ENCODE measurements at regions of chr13 and their contacts with region 1.

Region 1: DNA sequence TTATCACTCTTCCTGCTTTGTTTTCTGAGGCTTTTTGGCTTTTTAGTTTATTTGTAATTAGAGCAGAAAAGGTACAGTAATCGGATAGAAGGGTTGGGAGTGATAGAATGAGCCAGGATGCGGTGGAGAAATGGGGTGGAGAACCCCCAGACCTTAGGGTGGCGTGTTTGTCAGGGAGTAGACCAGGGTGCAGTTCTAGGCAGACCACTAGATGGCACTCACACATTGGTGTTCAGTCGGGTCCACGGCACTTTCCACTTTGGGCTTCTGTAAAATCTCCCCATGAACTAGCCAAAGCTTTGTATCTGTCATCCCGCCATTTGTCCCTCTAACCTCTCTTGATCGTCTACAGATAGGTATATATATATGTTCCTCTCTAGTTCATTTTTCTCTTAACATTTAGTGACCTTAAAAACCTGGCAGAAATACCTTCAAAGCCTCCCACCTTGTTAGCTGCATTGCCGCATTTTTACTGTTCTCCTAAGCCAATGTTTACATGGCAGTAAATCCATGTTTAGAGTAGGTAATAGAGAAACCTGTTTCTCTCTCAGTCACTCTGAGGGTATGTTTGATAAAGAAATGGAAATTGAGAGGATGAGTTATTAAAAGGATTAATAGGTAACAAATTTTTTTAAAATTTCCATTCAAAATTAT is 154.9 kb downstream of the TM9SF2 start:
- DNase-seq: no peak
- ATAC-seq: peak; percentile 75

Region 2: DNA sequence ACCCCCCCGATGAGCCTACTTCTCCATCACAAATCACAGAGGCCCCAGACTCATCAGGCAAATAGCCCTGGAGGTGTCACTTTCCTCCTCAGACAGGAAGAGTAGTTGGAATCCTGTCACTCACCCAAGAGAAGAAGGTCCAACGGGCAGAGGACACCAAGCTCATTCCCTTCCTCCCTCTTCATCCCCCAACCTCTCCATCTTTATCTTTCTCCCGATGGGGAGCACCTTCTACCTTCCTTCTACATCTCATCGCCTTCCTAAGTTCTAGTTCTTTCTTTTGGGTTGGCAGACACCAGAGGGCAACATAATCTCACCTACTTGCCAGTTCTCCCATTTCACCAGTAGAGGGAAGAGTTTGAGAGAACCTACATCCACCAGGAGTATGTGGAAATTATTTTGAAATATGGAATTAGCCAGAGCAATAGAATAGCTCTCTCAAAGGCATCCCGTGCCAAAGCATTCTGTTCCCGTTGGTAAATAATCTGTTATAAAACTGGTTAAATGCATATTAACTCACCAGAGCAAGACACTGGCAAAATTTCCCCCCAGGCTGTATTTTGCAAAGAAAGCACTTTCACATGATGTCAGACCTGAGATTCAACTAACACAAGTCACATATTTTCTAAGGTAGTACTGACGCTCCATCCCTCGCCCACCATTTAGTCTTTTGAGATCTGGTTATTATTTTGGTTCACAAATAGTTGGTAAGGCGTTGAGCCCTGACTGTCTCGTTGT is 260.3 kb after region 1 on chr13:
- intact Hi-C with region 1: loop called (anchors 1 kb)
- DNase-seq: no peak
- ATAC-seq: peak; percentile 71

Region 3: DNA sequence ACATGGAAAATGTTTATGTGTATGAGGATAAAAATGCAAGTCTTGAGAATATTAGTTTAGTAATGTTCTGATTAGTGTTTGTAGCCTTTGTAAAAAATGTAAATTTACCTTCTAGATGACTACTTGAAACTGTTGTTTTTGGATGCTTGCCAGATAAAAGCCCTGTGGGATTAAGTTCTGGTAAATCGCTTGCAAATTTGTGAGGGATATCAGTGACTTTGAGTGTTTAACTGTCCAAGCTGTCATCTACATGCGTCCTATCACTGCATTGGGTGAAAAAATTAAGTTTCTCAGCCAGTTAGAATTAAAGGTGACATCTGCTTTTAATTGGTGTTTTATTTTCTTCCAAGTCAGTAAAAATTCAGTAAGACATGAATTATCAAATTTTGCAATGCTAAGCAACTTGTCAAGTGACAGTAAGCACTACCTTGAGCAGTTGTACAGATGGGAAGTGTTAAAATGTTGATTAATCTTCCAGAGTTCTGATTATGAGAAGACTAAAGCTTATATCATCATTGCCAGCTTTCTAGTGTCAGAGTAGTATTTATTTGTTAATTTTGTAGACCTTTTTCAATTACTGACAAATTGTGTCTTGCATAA is 520.7 kb after region 1 on chr13:
- intact Hi-C with region 1: no loop called
- DNase-seq: no peak
- ATAC-seq: no peak

Region 4: DNA sequence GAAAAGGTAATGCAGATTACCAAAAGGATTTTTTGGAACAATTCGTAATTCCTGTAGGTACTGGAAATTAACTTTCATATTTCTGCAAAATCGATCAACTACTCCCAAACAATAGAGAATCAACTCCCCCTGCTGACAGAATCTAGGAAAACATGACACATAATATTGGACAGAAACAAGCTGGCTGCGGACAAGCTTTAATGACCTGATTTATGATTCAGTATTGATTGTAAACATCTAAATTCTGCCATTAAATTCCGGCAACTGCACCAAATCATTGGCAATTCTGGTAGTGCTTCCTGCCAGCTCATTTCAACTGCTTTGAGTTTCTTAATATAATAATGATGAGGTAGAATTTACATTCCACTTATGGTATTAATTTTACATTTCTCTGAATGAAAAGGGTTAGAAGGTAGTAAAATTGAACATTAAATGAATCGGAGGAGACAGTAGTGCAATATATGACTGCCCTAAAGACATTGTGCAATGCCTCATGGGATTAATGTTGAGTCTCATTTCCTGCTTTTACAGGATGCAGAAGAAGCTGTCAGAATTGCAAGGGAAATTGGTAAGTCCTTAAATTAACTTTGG is 579.2 kb after region 1 on chr13:
- intact Hi-C with region 1: loop called (anchors 2 kb)
- DNase-seq: no peak
- ATAC-seq: no peak

Region 5: DNA sequence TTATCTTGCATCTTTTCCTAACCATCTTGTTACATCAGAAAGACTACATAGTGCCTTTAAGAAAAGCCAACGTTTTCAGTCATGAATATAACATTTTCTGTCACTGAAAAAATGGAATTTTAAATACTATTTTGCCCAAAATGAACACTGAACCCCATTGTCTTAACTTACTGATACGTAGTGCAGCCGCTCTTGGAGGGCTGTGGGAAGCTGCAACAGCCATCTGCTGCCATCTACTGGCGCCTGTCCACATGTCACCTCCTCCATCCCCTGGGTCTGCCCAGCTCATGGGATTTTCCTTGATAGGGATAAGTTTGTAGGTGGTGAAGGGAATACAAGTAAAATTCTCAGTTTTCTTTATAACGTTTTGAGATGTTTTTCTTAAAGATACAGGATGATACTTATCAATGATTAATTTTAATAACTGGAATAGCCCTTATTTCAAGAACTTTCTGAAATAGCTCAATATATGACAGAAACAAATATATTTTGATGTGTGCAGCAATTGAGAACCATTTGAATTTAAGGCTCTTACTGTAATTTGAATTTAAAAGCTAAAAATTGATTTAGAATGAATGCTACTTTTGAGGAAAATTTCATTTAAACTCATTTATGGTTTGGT is 858.7 kb after region 1 on chr13:
- intact Hi-C with region 1: loop called (anchors 2 kb)
- DNase-seq: peak; percentile 80
- ATAC-seq: peak; percentile 91

Region 6: GRCh38 chr13:101098873-101099272 is 1442.7 kb after region 1 on chr13:
- intact Hi-C with region 1: loop called (anchors 5 kb)
- DNase-seq: no peak
- ATAC-seq: peak; percentile 10

Region 7: DNA sequence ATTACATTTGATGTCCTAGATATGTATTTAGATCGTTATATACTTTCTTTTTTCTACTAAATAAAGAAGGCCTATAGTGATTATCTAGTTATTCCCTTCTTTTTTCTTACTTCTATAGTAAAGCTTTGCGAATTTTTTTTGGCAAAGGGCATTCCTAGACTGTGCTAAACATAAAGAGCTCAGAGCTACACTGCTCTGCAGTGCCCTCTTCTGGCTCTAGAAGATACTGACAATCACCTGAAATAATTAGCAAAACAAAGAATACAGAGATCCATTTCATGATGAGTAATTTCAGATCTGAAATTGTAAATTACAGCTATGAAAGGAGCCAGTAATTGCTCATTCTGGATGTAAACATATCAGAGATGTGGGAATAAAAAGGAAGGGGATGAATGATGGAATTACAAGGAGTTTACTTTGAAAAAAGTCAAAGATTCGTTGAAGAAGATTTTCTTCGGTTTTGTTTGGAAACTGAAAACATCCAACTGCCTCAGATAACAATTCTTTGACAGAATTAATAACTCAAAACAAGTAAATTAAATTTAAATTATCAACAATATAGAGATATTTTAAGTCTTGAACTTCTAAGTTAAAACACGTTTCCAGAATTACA is 1471.6 kb after region 1 on chr13:
- intact Hi-C with region 1: loop called (anchors 5 kb)
- DNase-seq: no peak
- ATAC-seq: no peak